ENCODE measurements at regions of chr6 and their contacts with region 1.

Region 1: GRCh38 chr6:132300323-132300949 is 100.8 kb downstream of the MOXD1 start:
- DNase-seq: peak; percentile 66
- ATAC-seq: peak; percentile 87
- H3K4me3 ChIP-seq: no peak overlapping the region
- H3K27ac ChIP-seq: no peak overlapping the region
- H3K4me1 ChIP-seq: no peaks in the 10 kb centered on the region
- H3K27me3 ChIP-seq: no peaks in the 10 kb centered on the region
- CTCF ChIP-seq: peak; percentile 70

Region 2: DNA sequence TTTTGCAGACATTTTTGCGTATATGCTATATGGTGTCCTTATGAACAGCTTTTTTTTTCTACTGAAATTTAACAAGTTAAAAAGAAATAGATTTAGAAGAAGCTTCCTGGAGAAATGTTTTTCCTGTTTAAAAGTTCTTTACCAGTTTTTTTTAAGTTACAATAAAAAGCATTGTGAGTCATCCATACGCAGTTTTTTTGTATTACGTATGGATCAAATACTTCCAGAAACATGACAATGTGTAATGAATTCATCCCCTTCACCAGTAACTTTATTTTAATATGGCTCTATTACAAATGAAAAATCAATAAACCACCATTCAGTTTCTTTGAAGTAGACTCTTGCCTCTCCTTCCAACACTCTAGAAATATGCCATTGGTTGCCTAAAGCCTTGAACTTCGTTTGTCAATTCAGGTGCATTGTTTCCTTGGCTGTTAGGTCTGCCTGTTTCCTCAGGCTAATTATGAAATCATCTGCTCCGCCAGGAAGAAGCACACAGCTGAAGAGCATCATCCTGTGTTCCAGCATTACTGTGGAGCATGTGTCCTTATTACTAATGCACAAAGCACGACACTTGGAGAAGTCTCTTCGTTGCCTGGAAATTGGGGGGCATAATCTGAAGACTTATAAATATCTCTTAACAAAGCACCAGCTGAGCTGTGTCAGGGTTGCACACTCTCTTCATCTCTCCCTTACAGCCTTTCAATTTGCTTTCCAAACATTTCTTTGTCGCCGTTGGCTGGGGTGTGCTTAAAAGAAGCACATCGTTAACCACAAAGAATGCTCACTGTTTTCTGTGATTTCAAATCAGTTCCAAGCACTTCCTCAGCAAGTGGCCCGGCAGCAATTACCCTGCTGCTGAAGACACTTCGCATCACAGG is 91.2 kb after region 1 on chr6:
- CTCF ChIA-PET with region 1: no interaction called
- POLR2A ChIA-PET with region 1: no interaction called
- intact Hi-C with region 1: loop called (anchors 1 kb)
- DNase-seq: peak; percentile 26
- ATAC-seq: peak; percentile 51
- H3K4me3 ChIP-seq: no peak overlapping the region
- H3K27ac ChIP-seq: no peak overlapping the region
- H3K4me1 ChIP-seq: no peaks in the 10 kb centered on the region
- H3K27me3 ChIP-seq: no peaks in the 10 kb centered on the region
- CTCF ChIP-seq: no peak

Measured in PC-3 (cell line).